ENCODE measurements at regions of chr3 and their contacts with region 1.

Region 1: GRCh38 chr3:2898591-2899353 is 211.4 kb downstream of the IL5RA start:
- DNase-seq: peak in 1 of 2 experiments; percentile 13
- H3K4me3 ChIP-seq: no peak overlapping the region
- H3K4me3 Mint-ChIP-seq: peak overlapping the region; percentile 2
- H3K27ac Mint-ChIP-seq: no peak overlapping the region
- H3K4me1 ChIP-seq: peaks cover 44% of the 10 kb centered on the region
- H3K4me1 Mint-ChIP-seq: peaks cover 25% of the 10 kb centered on the region
- H3K27me3 ChIP-seq: no peaks in the 10 kb centered on the region
- H3K27me3 Mint-ChIP-seq: no peaks in the 10 kb centered on the region
- CTCF ChIP-seq: no peak

Region 2: GRCh38 chr3:2862366-2862765 is 36.4 kb before region 1 on chr3:
- CTCF ChIA-PET with region 1: no interaction called
- POLR2A ChIA-PET with region 1: no interaction called
- intact Hi-C with region 1: loop called (anchors 5 kb)
- DNase-seq: peak in 1 of 2 experiments; percentile 2
- H3K4me3 ChIP-seq: no peak overlapping the region
- H3K4me3 Mint-ChIP-seq: no peak overlapping the region
- H3K27ac Mint-ChIP-seq: no peak overlapping the region
- H3K4me1 ChIP-seq: peaks cover 14% of the 10 kb centered on the region
- H3K4me1 Mint-ChIP-seq: peaks cover 22% of the 10 kb centered on the region
- H3K27me3 ChIP-seq: no peaks in the 10 kb centered on the region
- H3K27me3 Mint-ChIP-seq: no peaks in the 10 kb centered on the region
- CTCF ChIP-seq: no peak

Region 3: GRCh38 chr3:2968475-2968874 is 69.7 kb after region 1 on chr3:
- CTCF ChIA-PET with region 1: no interaction called
- POLR2A ChIA-PET with region 1: no interaction called
- intact Hi-C with region 1: loop called (anchors 5 kb)
- DNase-seq: no peak
- H3K4me3 ChIP-seq: no peak overlapping the region
- H3K4me3 Mint-ChIP-seq: peak overlapping the region; percentile 27
- H3K27ac Mint-ChIP-seq: no peak overlapping the region
- H3K4me1 ChIP-seq: peaks cover 28% of the 10 kb centered on the region
- H3K4me1 Mint-ChIP-seq: peaks cover 6% of the 10 kb centered on the region
- H3K27me3 ChIP-seq: no peaks in the 10 kb centered on the region
- H3K27me3 Mint-ChIP-seq: no peaks in the 10 kb centered on the region
- CTCF ChIP-seq: no peak

Measured in Caco-2 (cell line).